ENCODE measurements at regions of chr10 and their contacts with region 1.

Region 1: GRCh38 chr10:6445501-6446316 is 134.4 kb downstream of the PRKCQ start:
- DNase-seq: peak; percentile 23 to 76 (median 43)
- H3K4me3 ChIP-seq: no peak overlapping the region
- H3K27ac ChIP-seq: no peak overlapping the region
- H3K4me1 ChIP-seq: no peaks in the 10 kb centered on the region
- H3K27me3 ChIP-seq: no peaks in the 10 kb centered on the region
- CTCF ChIP-seq: peak; percentile 39 to 59 (median 50)
- POLR2A ChIP-seq: no peak

Region 2: DNA sequence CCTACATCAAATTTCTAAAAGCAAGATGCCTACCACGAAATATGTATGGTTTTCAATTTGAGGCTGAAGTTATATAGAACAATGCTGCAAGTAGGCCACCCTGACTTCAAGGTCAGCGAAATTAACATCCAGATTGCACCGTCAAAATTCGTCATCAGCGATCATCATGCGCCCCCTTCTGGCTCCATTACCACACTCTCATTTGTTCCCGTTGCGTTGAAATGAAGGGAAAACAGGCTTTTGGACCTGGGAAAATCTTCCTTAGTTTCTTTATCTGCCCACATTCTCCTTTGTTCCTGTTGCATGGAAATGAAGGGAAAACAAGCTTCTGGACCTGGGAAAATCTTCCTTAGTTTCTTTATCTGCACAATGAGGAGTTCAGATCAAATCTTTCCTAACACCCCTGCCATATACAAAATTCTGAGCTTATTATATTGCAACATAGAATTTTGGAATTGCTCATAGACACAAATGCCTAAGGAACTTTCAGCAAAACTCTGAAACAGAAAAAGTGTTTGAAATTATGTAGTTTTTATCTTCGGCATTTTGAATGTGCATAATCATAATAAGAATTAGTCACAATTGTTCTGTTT is 232.6 kb after region 1 on chr10:
- intact Hi-C with region 1: loop called in 1 of 2 experiments (anchors 10 kb)
- DNase-seq: peak; percentile 36 to 78 (median 56)
- H3K4me3 ChIP-seq: no peak overlapping the region
- H3K27ac ChIP-seq: no peak overlapping the region
- H3K4me1 ChIP-seq: no peaks in the 10 kb centered on the region
- H3K27me3 ChIP-seq: no peaks in the 10 kb centered on the region
- CTCF ChIP-seq: peak; percentile 33 to 72 (median 68)
- POLR2A ChIP-seq: no peak

Region 3: DNA sequence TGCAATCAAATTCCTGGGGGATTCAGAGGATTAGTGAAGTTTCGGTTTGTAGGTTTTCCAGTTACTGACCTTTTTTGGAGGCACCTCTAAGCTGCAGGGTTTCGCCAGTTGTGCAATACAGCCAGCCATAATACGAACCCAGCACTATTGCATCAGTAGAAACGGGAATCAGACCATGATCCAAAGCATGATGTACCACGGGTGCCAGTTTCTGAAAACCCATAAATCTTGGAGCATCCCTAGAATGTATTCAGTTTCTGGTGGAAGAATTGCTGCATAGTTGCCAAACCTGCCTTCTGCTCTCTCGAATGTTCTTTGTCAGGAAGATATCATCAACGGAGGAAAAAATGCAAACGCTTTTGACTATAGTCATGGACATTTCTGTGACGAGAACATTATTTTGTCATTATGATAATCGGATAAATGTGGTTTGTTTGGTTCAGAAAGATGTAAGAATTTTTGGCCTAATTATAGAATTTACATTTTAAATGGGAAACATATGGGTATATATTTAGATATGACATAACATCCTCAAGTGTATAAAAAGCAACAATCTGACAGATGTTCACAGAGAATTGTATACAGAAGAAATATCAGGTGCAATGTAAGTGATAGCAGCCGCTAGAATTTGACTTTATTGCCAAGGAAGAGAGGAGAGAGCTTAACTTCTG is 320.6 kb after region 1 on chr10:
- intact Hi-C with region 1: no loop called
- DNase-seq: no peak
- H3K4me3 ChIP-seq: no peak overlapping the region
- H3K27ac ChIP-seq: no peak overlapping the region
- H3K4me1 ChIP-seq: no peaks in the 10 kb centered on the region
- H3K27me3 ChIP-seq: no peaks in the 10 kb centered on the region
- CTCF ChIP-seq: no peak
- POLR2A ChIP-seq: no peak